MCF 10A (cell line): ENCODE measurements at regions of chr1 and their contacts with region 1.

Region 1: DNA sequence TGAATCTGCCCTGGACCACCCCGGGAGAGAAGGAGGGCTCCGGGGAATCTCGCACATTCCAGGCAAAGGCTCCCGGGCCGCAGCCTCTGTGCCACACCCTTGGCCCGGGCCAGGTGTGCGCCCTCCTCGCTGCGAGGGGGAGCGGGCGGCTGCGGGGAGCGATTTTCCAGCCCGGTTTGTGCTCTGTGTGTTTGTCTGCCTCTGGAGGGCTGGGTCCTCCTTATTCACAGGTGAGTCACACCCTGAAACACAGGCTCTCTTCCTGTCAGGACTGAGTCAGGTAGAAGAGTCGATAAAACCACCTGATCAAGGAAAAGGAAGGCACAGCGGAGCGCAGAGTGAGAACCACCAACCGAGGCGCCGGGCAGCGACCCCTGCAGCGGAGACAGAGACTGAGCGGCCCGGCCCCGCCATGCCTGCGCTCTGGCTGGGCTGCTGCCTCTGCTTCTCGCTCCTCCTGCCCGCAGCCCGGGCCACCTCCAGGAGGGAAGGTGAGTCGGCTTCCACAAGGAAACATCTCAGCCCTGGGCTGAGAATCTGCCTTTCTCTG is at the start of gene LAMC2:
- DNase-seq: peak; percentile 98
- H3K4me3 Mint-ChIP-seq: peak within 1 kb of the TSS; percentile 92
- H3K27ac Mint-ChIP-seq: peak within 1 kb of the TSS; percentile 98
- H3K4me1 Mint-ChIP-seq: peaks cover 36% of the 10 kb centered on the region
- H3K27me3 Mint-ChIP-seq: no peaks in the 10 kb centered on the region
- CTCF ChIP-seq: peak; percentile 70
- total RNA-seq, gene LAMC2: 751 and 884 TPM in 2 replicates

Region 2: GRCh38 chr1:183139281-183139942 is 46.6 kb before region 1 on chr1:
- CTCF ChIA-PET with region 1: interaction called, 7 read pairs
- POLR2A ChIA-PET with region 1: interaction called, 9 read pairs
- intact Hi-C with region 1: loop called (anchors 1 kb)
- DNase-seq: peak; percentile 81
- H3K4me3 Mint-ChIP-seq: peak overlapping the region; percentile 1
- H3K27ac Mint-ChIP-seq: peak overlapping the region; percentile 99
- H3K4me1 Mint-ChIP-seq: peaks cover 27% of the 10 kb centered on the region
- H3K27me3 Mint-ChIP-seq: no peaks in the 10 kb centered on the region
- CTCF ChIP-seq: no peak

Region 3: DNA sequence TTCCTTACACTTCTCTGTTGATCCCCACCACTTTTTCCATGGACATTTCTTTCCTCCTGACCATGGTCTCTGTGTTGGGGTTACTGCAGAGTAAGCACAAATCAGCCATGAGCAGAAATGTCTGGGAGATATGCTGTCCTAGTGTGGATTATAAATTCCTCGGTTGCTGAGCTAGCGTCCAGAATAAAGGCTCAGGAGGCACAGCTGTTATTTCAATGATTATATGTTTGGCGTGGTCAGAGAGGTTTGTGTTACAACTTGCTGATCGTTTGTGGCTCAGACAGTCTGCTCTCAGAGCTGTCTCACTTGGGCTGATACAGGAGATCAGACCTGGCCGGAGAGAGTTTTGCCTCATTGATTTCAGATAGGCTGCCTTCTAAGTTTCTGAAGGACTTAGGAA is 37.4 kb before region 1 on chr1:
- CTCF ChIA-PET with region 1: interaction called, 5 read pairs
- POLR2A ChIA-PET with region 1: interaction called, 11 read pairs
- intact Hi-C with region 1: no loop called
- DNase-seq: no peak
- H3K4me3 Mint-ChIP-seq: no peak overlapping the region
- H3K27ac Mint-ChIP-seq: peak overlapping the region; percentile 95
- H3K4me1 Mint-ChIP-seq: peaks cover 31% of the 10 kb centered on the region
- H3K27me3 Mint-ChIP-seq: no peaks in the 10 kb centered on the region
- CTCF ChIP-seq: no peak